ENCODE measurements at regions of chr3 and their contacts with region 1.

Region 1: GRCh38 chr3:183385698-183386613 is 42.5 kb downstream of the MCF2L2 start:
- DNase-seq: no peak
- H3K4me3 ChIP-seq: no peak overlapping the region
- H3K27ac ChIP-seq: peak overlapping the region in 1 of 4 donors; percentile 16
- H3K4me1 ChIP-seq: peaks cover 0 to 3% (median 0%) of the 10 kb centered on the region in 4 donors
- H3K27me3 ChIP-seq: no peaks in the 10 kb centered on the region
- CTCF ChIP-seq: peak; percentile 74 to 80 (median 77)
- EP300 ChIP-seq: no peak
- POLR2A ChIP-seq: no peak

Region 2: GRCh38 chr3:183122257-183122932 is 263.6 kb before region 1 on chr3:
- intact Hi-C with region 1: loop called (anchors 2 kb)
- DNase-seq: no peak
- H3K4me3 ChIP-seq: no peak overlapping the region
- H3K27ac ChIP-seq: no peak overlapping the region
- H3K4me1 ChIP-seq: peaks cover 0 to 6% (median 2%) of the 10 kb centered on the region in 4 donors
- H3K27me3 ChIP-seq: peaks cover 0 to 7% (median 0%) of the 10 kb centered on the region in 4 donors
- CTCF ChIP-seq: peak; percentile 82 to 84 (median 83)
- EP300 ChIP-seq: no peak
- POLR2A ChIP-seq: no peak

Region 3: GRCh38 chr3:183185696-183186095 is 200.3 kb before region 1 on chr3:
- intact Hi-C with region 1: loop called (anchors 1 kb)
- DNase-seq: no peak
- H3K4me3 ChIP-seq: no peak overlapping the region
- H3K27ac ChIP-seq: no peak overlapping the region
- H3K4me1 ChIP-seq: peaks cover 0 to 12% (median 9%) of the 10 kb centered on the region in 4 donors
- H3K27me3 ChIP-seq: peaks cover 0 to 4% (median 0%) of the 10 kb centered on the region in 4 donors
- CTCF ChIP-seq: no peak
- EP300 ChIP-seq: no peak
- POLR2A ChIP-seq: no peak

Region 4: GRCh38 chr3:183435661-183436060 is 49.7 kb after region 1 on chr3:
- intact Hi-C with region 1: no loop called
- DNase-seq: no peak
- H3K4me3 ChIP-seq: no peak overlapping the region
- H3K27ac ChIP-seq: no peak overlapping the region
- H3K4me1 ChIP-seq: no peaks in the 10 kb centered on the region
- H3K27me3 ChIP-seq: no peaks in the 10 kb centered on the region
- CTCF ChIP-seq: no peak
- EP300 ChIP-seq: no peak
- POLR2A ChIP-seq: no peak

Region 5: DNA sequence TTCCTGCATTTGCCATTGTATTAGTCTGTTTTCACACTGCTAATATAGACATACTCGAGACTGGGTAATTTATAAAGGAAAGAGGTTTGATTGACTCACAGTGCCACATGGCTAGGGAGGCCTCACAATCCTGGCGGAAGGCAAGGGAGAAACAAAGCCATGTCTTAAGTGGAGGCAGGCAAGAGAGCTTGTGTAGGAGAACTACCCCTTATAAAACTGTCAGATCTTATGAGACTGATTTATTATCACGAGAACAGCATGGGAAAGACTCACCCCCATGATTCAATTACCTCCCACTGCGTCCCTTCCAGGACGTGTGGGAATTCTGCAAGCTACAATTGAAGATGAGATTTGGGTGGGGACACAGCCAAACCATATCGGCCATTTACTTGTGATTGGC is 339.4 kb after region 1 on chr3:
- intact Hi-C with region 1: no loop called
- DNase-seq: no peak
- H3K4me3 ChIP-seq: no peak overlapping the region
- H3K27ac ChIP-seq: no peak overlapping the region
- H3K4me1 ChIP-seq: no peaks in the 10 kb centered on the region
- H3K27me3 ChIP-seq: no peaks in the 10 kb centered on the region
- CTCF ChIP-seq: no peak
- EP300 ChIP-seq: no peak
- POLR2A ChIP-seq: no peak